Endothelial cell of umbilical vein (primary cell): ENCODE measurements at regions of chr5 and their contacts with region 1.

Region 1: DNA sequence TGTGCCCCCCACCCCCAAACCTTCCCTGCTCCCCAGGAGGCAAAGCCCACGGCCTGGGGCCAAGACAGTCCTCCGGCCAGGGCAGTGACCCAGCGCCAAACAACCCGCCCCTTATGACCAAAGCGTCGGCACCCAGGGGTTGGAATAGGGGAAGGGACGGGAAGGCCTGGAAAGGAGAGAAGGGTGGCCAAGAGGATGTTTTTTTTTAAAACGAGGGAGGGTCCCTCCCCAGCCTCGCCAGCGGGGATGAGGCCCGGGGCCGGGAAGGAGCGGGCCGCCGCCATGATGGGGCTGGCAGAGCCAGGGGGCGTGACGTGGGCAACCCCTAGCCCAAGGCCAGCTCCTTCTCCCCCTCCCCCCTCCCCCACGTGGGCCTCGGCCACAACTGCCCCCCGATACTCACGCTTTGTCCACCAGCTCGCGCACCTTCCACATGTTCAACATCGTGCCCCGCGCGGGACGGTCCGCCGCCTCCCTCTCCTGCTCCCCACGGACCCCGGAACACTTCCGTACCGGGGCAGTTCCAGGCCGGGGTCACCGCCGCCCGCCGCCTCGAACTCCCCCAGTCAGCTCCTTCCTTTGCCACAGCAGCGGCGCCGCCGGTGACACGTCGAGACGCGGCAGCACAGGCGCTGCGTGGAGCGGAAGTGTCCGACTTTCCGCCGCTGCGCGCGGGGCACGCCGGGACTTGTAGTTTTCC is at the start of gene CLINT1:
- DNase-seq: peak; percentile 86
- H3K4me3 ChIP-seq: peak within 1 kb of the TSS; percentile 68 to 95 (median 93)
- H3K27ac ChIP-seq: peak within 1 kb of the TSS; percentile 81
- H3K4me1 ChIP-seq: peaks cover 14% of the 10 kb centered on the region
- H3K27me3 ChIP-seq: no peaks in the 10 kb centered on the region
- CTCF ChIP-seq: no peak
- POLR2A ChIP-seq: peak; percentile 74
- total RNA-seq, gene CLINT1: 76.6 and 79.6 TPM in 2 replicates

Region 2: GRCh38 chr5:156271569-156271968 is 1587.1 kb before region 1 on chr5:
- CTCF ChIA-PET with region 1: no interaction called
- POLR2A ChIA-PET with region 1: no interaction called
- dilution Hi-C with region 1: no loop called
- intact Hi-C with region 1: no loop called
- DNase-seq: no peak
- H3K4me3 ChIP-seq: no peak overlapping the region
- H3K27ac ChIP-seq: no peak overlapping the region
- H3K4me1 ChIP-seq: no peaks in the 10 kb centered on the region
- H3K27me3 ChIP-seq: no peaks in the 10 kb centered on the region
- CTCF ChIP-seq: no peak
- POLR2A ChIP-seq: no peak

Region 3: DNA sequence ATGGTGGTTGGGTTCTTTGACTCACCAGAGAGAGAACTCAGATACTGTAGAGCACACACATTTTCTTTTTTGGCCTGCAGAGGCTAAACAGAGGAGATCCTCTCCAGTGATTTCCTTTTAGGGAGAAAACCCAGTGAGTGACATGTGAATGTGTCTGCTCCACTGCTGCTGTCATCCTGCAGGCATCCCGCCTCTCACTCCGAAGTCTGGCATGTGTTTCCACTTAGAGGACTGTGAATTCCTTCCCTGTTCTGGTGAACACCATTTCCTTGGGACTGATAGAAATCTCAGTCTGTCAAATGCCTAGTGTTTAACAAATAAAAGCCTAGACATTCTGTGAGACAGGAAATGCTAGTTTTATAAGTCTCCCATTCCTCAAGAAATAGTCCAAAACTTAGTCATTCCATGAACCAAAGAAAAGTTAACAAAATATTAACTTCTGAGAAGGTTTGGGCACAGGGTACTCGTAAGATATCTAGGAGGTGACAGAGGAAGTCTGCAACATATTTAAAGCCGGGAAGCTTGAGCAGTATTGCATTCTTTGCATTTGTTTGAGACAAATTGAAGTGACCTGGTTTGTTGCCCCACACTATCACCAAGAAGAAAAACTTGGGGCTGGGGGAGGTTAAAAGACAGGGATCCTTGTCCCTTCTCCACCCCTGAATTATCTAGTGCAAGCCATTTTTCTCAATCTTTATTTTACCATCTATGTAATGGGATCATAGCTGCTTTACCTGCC is 473.5 kb before region 1 on chr5:
- CTCF ChIA-PET with region 1: no interaction called
- POLR2A ChIA-PET with region 1: no interaction called
- dilution Hi-C with region 1: no loop called
- intact Hi-C with region 1: loop called (anchors 2 kb)
- DNase-seq: peak; percentile 91
- H3K4me3 ChIP-seq: no peak overlapping the region
- H3K27ac ChIP-seq: peak overlapping the region; percentile 88
- H3K4me1 ChIP-seq: peaks cover 57% of the 10 kb centered on the region
- H3K27me3 ChIP-seq: no peaks in the 10 kb centered on the region
- CTCF ChIP-seq: no peak
- POLR2A ChIP-seq: no peak

Region 4: DNA sequence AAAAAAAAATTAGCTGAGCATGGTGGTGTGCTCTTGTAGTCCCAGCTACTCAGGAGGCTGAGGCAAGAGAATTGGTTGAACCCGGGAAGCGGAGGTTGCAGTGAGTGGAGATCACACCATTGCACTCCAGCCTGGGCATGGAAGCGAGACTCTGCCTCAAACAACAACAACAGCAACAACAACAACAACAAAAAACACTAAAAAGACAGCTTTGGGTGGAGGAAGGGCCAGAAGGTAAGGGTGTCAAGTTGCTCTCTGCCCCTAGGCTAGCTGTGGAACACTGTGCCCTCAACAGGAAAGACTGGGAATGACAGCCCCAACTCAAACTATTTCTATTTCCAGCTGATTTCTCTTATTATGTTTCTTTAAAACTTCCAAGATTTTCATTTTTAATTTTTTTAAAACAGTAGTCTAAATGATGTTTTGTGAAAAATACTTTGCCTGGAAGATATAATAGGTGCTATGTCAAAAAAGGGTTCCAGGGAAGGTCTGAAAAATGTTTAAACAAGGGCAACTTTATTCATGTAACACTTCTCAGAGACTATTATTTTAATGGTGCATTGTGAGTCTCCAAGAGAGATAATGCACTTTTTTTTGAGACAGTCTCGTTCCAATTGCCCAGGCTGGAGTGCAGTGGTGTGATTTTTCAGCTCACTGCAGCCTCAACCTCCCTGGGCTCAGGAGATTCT is 29.6 kb before region 1 on chr5:
- CTCF ChIA-PET with region 1: interaction called, 12 read pairs
- POLR2A ChIA-PET with region 1: no interaction called
- dilution Hi-C with region 1: no loop called
- intact Hi-C with region 1: loop called (anchors 2 kb)
- DNase-seq: peak; percentile 19
- H3K4me3 ChIP-seq: no peak overlapping the region
- H3K27ac ChIP-seq: no peak overlapping the region
- H3K4me1 ChIP-seq: peaks cover 27% of the 10 kb centered on the region
- H3K27me3 ChIP-seq: no peaks in the 10 kb centered on the region
- CTCF ChIP-seq: peak; percentile 13 to 36
- POLR2A ChIP-seq: no peak

Region 5: GRCh38 chr5:157917899-157918809 is 59.5 kb after region 1 on chr5:
- CTCF ChIA-PET with region 1: interaction called, 27 read pairs
- POLR2A ChIA-PET with region 1: no interaction called
- dilution Hi-C with region 1: no loop called
- intact Hi-C with region 1: loop called (anchors 1 kb)
- DNase-seq: peak; percentile 74
- H3K4me3 ChIP-seq: no peak overlapping the region
- H3K27ac ChIP-seq: no peak overlapping the region
- H3K4me1 ChIP-seq: peaks cover 8% of the 10 kb centered on the region
- H3K27me3 ChIP-seq: no peaks in the 10 kb centered on the region
- CTCF ChIP-seq: peak; percentile 57 to 64
- POLR2A ChIP-seq: no peak

Region 6: GRCh38 chr5:157994906-157995519 is 136.3 kb after region 1 on chr5:
- CTCF ChIA-PET with region 1: interaction called, 22 read pairs
- POLR2A ChIA-PET with region 1: no interaction called
- dilution Hi-C with region 1: no loop called
- intact Hi-C with region 1: loop called (anchors 1 kb)
- DNase-seq: peak; percentile 63
- H3K4me3 ChIP-seq: no peak overlapping the region
- H3K27ac ChIP-seq: no peak overlapping the region
- H3K4me1 ChIP-seq: no peaks in the 10 kb centered on the region
- H3K27me3 ChIP-seq: no peaks in the 10 kb centered on the region
- CTCF ChIP-seq: peak; percentile 63 to 79
- POLR2A ChIP-seq: no peak

Region 7: DNA sequence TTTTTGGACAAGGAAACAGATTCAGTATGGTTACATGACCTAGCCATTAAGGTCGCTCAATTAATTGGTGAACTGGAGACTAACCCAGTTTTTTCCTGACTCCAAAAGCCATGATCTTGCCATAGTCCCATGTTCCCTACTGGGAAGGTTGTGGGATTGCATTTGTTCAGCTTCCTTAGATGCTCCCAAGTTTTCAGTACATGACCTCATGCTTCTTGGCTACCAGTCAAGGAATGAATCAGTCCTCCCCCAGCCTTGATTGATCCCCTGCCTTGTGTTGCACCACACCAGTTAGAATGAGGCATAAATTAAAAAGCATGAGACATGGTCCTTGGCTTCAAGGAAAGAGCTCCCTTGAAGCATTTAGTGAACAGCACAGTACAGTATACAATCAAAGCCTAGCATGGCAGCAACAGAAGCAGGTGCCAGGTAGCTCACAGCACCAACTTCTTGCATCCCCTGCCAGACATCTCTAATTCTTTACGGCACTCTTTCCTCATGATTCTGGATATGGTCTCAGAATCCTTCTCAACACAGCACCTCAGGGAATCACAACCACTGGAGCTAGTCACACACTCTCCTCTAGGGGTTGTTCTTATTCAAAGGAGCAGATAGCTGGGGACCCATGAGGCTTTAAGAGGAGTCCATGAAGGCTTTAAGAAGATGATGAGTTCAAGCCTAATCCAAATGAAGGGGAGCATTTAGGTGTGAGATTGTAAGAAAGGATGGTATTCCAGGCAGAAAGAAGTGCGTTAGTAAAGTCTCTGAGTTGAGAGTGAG is 295.7 kb after region 1 on chr5:
- CTCF ChIA-PET with region 1: no interaction called
- POLR2A ChIA-PET with region 1: no interaction called
- dilution Hi-C with region 1: no loop called
- intact Hi-C with region 1: no loop called
- DNase-seq: peak; percentile 58
- H3K4me3 ChIP-seq: no peak overlapping the region
- H3K27ac ChIP-seq: no peak overlapping the region
- H3K4me1 ChIP-seq: no peaks in the 10 kb centered on the region
- H3K27me3 ChIP-seq: no peaks in the 10 kb centered on the region
- CTCF ChIP-seq: no peak
- POLR2A ChIP-seq: no peak